ENCODE measurements at regions of chr14 and their contacts with region 1.

Region 1: GRCh38 chr14:21917699-21918436 is 244.2 kb upstream of the OR4E1 start:
- DNase-seq: peak; percentile 46
- H3K4me3 Mint-ChIP-seq: peak overlapping the region; percentile 29
- H3K27ac Mint-ChIP-seq: no peak overlapping the region
- H3K4me1 Mint-ChIP-seq: peaks cover 42% of the 10 kb centered on the region
- H3K27me3 Mint-ChIP-seq: no peaks in the 10 kb centered on the region
- CTCF ChIP-seq: no peak

Region 2: GRCh38 chr14:21317398-21317797 is 600.5 kb before region 1 on chr14:
- CTCF ChIA-PET with region 1: no interaction called
- intact Hi-C with region 1: no loop called
- DNase-seq: no peak
- H3K4me3 Mint-ChIP-seq: no peak overlapping the region
- H3K27ac Mint-ChIP-seq: no peak overlapping the region
- H3K4me1 Mint-ChIP-seq: no peaks in the 10 kb centered on the region
- H3K27me3 Mint-ChIP-seq: peaks cover 15% of the 10 kb centered on the region
- CTCF ChIP-seq: no peak

Region 3: GRCh38 chr14:21933681-21934080 is 15.8 kb after region 1 on chr14:
- CTCF ChIA-PET with region 1: interaction called, 6 read pairs
- intact Hi-C with region 1: loop called (anchors 1 kb)
- DNase-seq: no peak
- H3K4me3 Mint-ChIP-seq: no peak overlapping the region
- H3K27ac Mint-ChIP-seq: no peak overlapping the region
- H3K4me1 Mint-ChIP-seq: no peaks in the 10 kb centered on the region
- H3K27me3 Mint-ChIP-seq: peaks cover 8% of the 10 kb centered on the region
- CTCF ChIP-seq: peak; percentile 19

Region 4: GRCh38 chr14:21987937-21988336 is 70.1 kb after region 1 on chr14:
- CTCF ChIA-PET with region 1: interaction called, 6 read pairs
- intact Hi-C with region 1: loop called (anchors 5 kb)
- DNase-seq: peak; percentile 34
- H3K4me3 Mint-ChIP-seq: no peak overlapping the region
- H3K27ac Mint-ChIP-seq: no peak overlapping the region
- H3K4me1 Mint-ChIP-seq: no peaks in the 10 kb centered on the region
- H3K27me3 Mint-ChIP-seq: peaks cover 53% of the 10 kb centered on the region
- CTCF ChIP-seq: peak; percentile 32

Region 5: DNA sequence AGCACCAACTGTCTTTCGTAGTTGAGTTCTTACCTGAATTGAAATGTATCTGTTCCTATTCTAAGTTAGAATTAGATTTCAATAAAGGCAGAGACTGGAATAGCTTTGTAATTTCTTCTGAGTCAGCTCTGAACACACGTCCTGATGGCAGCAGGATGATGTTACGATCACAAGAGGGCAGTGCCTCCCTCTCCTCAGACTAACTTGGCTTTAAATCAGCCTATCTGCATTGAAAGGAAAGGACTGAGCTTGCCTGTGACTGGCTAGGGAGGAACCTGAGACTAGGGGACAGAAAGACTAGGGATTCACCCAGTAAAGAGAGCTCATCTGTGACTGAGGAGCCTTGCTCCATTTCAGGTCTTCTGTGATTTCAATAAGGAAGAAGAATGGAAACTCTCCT is 79.4 kb after region 1 on chr14:
- CTCF ChIA-PET with region 1: interaction called, 9 read pairs
- intact Hi-C with region 1: loop called (anchors 5 kb)
- DNase-seq: peak; percentile 24
- H3K4me3 Mint-ChIP-seq: no peak overlapping the region
- H3K27ac Mint-ChIP-seq: no peak overlapping the region
- H3K4me1 Mint-ChIP-seq: peaks cover 5% of the 10 kb centered on the region
- H3K27me3 Mint-ChIP-seq: peaks cover 57% of the 10 kb centered on the region
- CTCF ChIP-seq: no peak

Region 6: GRCh38 chr14:22024137-22024536 is 106.3 kb after region 1 on chr14:
- CTCF ChIA-PET with region 1: no interaction called
- intact Hi-C with region 1: no loop called
- DNase-seq: no peak
- H3K4me3 Mint-ChIP-seq: no peak overlapping the region
- H3K27ac Mint-ChIP-seq: no peak overlapping the region
- H3K4me1 Mint-ChIP-seq: peaks cover 8% of the 10 kb centered on the region
- H3K27me3 Mint-ChIP-seq: peaks cover 43% of the 10 kb centered on the region
- CTCF ChIP-seq: no peak

Region 7: GRCh38 chr14:22039938-22040775 is 122.3 kb after region 1 on chr14:
- CTCF ChIA-PET with region 1: interaction called, 3 read pairs
- intact Hi-C with region 1: loop called (anchors 10 kb)
- DNase-seq: peak; percentile 24
- H3K4me3 Mint-ChIP-seq: no peak overlapping the region
- H3K27ac Mint-ChIP-seq: no peak overlapping the region
- H3K4me1 Mint-ChIP-seq: no peaks in the 10 kb centered on the region
- H3K27me3 Mint-ChIP-seq: peaks cover 38% of the 10 kb centered on the region
- CTCF ChIP-seq: no peak

Region 8: GRCh38 chr14:22099942-22100763 is 182.3 kb after region 1 on chr14:
- CTCF ChIA-PET with region 1: interaction called, 11 read pairs
- intact Hi-C with region 1: loop called (anchors 2 kb)
- DNase-seq: peak; percentile 75
- H3K4me3 Mint-ChIP-seq: no peak overlapping the region
- H3K27ac Mint-ChIP-seq: no peak overlapping the region
- H3K4me1 Mint-ChIP-seq: peaks cover 9% of the 10 kb centered on the region
- H3K27me3 Mint-ChIP-seq: peaks cover 6% of the 10 kb centered on the region
- CTCF ChIP-seq: peak; percentile 55

Measured in Calu3 (cell line).